Activated CD8-positive, alpha-beta T cell treated with anti-CD3 and anti-CD28 coated beads for 36 hours (primary cell): ENCODE measurements at regions of chr11 and their contacts with region 1.

Region 1: DNA sequence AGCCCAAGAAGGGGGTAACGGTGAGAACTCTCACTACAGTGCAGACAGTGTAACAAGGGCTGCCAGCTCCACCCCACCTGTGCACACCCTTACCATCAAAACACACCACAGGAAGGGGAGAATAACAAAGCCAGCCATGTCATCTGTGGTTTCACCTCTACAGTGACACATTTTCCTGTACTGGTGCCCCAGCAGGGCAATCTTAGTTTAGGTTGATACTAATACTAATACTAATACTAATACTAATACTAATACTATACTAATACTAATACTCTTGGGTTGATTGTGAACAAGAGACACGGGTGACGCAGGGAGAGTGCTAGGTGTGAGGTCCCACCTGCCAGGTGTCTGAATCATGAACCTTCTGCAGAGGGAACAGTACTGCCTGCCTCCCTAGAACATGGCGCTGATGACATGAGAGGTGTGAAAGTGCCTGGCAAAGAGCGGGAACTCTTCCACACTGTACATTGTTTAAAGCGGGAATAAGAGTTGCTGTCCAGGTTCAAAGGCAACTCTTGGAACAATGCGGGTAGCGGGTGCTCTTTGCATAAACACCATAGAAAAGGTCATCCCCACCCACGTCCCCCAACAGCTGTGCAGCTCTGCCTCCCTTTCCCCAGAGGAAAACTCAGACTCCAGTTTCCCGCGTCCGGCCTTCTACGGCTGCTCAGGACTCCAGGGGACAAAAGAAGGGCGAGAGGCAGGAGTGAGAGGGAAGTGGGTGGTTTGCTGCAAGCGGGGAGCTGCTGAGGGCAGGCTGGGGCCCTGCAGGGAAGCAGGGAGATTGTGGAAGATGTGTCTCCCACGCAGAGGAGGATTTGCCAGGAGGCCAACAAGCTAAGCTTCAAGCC is 25.0 kb upstream of the TMPRSS4 start:
- DNase-seq: peak; percentile 85
- ATAC-seq: peak; percentile 78
- H3K4me3 Mint-ChIP-seq: no peak overlapping the region
- H3K27ac Mint-ChIP-seq: peak overlapping the region; percentile 82
- H3K4me1 Mint-ChIP-seq: peaks cover 59% of the 10 kb centered on the region
- H3K27me3 Mint-ChIP-seq: no peaks in the 10 kb centered on the region
- CTCF ChIP-seq: no peak

Region 2: GRCh38 chr11:117807482-117808327 is 244.1 kb before region 1 on chr11:
- CTCF ChIA-PET with region 1: interaction called, 119 read pairs
- POLR2A ChIA-PET with region 1: interaction called, 6 read pairs
- intact Hi-C with region 1: no loop called
- DNase-seq: peak; percentile 91
- ATAC-seq: peak; percentile 74
- H3K4me3 Mint-ChIP-seq: no peak overlapping the region
- H3K27ac Mint-ChIP-seq: no peak overlapping the region
- H3K4me1 Mint-ChIP-seq: peaks cover 16% of the 10 kb centered on the region
- H3K27me3 Mint-ChIP-seq: no peaks in the 10 kb centered on the region
- CTCF ChIP-seq: peak; percentile 99

Region 3: DNA sequence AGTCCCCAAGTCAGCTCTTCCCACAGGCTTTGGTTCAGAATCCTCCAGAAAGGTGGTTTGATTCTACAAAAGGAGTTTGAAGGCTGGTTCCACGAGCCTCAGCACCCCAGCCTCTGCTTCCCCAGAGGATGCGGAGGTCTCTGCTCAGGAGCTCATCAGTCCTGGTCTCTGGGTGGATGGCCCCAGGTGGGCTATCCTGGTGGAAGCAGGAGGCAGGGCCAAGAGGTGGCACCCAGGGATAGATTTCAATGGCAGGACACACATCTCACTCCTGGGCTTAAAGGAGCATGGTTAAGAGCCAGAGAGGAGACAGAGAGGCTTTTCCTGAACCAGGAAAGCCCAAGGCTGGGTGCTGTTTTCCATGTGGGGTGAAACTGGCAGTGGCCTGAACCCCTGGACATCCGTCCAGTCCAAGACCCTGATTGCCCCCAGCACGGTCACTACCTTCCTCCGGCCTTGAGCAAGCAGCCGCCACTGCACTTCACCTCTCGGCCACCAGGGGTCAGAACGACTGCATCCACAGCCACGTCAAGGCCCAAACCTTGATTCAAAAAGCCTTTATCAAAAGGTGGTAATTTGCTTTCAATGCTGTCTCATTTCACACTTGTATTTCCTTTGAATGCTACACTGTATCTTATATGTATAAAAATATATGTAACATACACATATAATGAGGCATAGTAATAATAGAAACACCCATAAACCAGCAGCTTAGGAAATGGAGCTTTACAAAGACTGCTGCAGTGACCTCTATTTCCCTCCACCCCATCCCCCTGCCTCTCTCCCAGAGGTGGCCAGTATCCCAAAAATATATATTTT is 208.0 kb before region 1 on chr11:
- CTCF ChIA-PET with region 1: interaction called, 118 read pairs
- POLR2A ChIA-PET with region 1: interaction called, 5 read pairs
- intact Hi-C with region 1: loop called (anchors 1 kb)
- DNase-seq: peak; percentile 92
- ATAC-seq: peak; percentile 96
- H3K4me3 Mint-ChIP-seq: no peak overlapping the region
- H3K27ac Mint-ChIP-seq: no peak overlapping the region
- H3K4me1 Mint-ChIP-seq: peaks cover 4% of the 10 kb centered on the region
- H3K27me3 Mint-ChIP-seq: no peaks in the 10 kb centered on the region
- CTCF ChIP-seq: peak; percentile 96

Region 4: GRCh38 chr11:117919781-117920221 is 132.0 kb before region 1 on chr11:
- CTCF ChIA-PET with region 1: interaction called, 18 read pairs
- POLR2A ChIA-PET with region 1: no interaction called
- intact Hi-C with region 1: no loop called
- DNase-seq: peak; percentile 41
- ATAC-seq: peak; percentile 98
- H3K4me3 Mint-ChIP-seq: no peak overlapping the region
- H3K27ac Mint-ChIP-seq: peak overlapping the region; percentile 34
- H3K4me1 Mint-ChIP-seq: peaks cover 11% of the 10 kb centered on the region
- H3K27me3 Mint-ChIP-seq: no peaks in the 10 kb centered on the region
- CTCF ChIP-seq: no peak

Region 5: DNA sequence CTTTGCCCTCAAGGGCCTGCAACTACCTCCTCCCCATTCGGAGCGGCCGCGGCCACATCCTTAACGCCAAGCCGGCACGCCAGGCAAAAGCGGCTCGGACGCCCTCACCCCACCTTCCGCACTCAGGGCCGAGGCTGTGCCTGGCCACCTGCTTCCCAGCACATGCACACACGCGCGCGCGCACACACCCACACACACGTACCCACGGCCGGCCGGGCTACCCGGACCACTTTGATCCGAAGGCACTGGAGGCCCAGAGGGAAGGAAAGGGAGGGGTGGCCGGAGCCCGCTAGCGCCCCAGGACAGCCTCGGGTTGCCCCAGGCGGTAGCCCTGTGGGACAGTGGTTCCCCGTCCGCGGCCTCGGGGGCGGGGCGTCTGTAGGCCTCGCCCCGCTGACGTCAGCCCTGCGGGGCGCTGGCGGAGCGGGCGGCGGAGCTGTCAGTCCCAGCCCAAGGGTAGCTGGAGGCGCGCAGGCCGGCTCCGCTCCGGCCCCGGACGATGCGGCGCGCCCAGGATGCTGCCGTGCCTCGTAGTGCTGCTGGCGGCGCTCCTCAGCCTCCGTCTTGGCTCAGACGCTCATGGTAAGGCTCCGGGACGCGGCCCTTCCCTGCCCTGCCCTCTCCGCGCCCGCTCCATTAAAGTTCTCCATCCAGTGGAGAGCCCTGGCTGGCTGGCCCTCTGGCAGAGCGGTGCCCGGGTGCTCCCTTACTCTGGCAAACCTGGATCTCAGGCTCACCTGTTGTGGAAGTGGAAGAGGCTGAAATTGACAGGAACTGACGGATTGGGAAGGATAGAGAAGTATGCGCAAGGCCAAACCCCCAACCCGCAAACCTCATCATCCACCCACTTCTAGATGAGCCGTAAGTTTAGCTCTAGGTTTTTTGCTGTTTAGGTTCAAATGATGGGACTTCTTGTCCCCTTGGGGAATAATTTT is 65.6 kb before region 1 on chr11 and contains the start of gene IL10RA:
- CTCF ChIA-PET with region 1: interaction called, 56 read pairs
- POLR2A ChIA-PET with region 1: interaction called, 62 read pairs
- intact Hi-C with region 1: no loop called
- DNase-seq: peak; percentile 89
- ATAC-seq: peak; percentile 85
- H3K4me3 Mint-ChIP-seq: peak within 1 kb of the TSS; percentile 80
- H3K27ac Mint-ChIP-seq: peak within 1 kb of the TSS; percentile 97
- H3K4me1 Mint-ChIP-seq: peaks cover 74% of the 10 kb centered on the region
- H3K27me3 Mint-ChIP-seq: no peaks in the 10 kb centered on the region
- CTCF ChIP-seq: no peak
- total RNA-seq, gene IL10RA: 73.3 to 80.9 TPM

Region 6: GRCh38 chr11:118012083-118012669 is 39.7 kb before region 1 on chr11:
- CTCF ChIA-PET with region 1: interaction called, 26 read pairs
- POLR2A ChIA-PET with region 1: interaction called, 15 read pairs
- intact Hi-C with region 1: no loop called
- DNase-seq: peak; percentile 48
- ATAC-seq: peak; percentile 54
- H3K4me3 Mint-ChIP-seq: no peak overlapping the region
- H3K27ac Mint-ChIP-seq: peak overlapping the region; percentile 74
- H3K4me1 Mint-ChIP-seq: peaks cover 96% of the 10 kb centered on the region
- H3K27me3 Mint-ChIP-seq: no peaks in the 10 kb centered on the region
- CTCF ChIP-seq: no peak

Region 7: GRCh38 chr11:118092907-118093571 is 41.2 kb after region 1 on chr11:
- CTCF ChIA-PET with region 1: no interaction called
- POLR2A ChIA-PET with region 1: no interaction called
- intact Hi-C with region 1: no loop called
- DNase-seq: no peak
- ATAC-seq: no peak
- H3K4me3 Mint-ChIP-seq: no peak overlapping the region
- H3K27ac Mint-ChIP-seq: no peak overlapping the region
- H3K4me1 Mint-ChIP-seq: no peaks in the 10 kb centered on the region
- H3K27me3 Mint-ChIP-seq: no peaks in the 10 kb centered on the region
- CTCF ChIP-seq: no peak